ENCODE measurements at regions of chr7 and their contacts with region 1.

Region 1: DNA sequence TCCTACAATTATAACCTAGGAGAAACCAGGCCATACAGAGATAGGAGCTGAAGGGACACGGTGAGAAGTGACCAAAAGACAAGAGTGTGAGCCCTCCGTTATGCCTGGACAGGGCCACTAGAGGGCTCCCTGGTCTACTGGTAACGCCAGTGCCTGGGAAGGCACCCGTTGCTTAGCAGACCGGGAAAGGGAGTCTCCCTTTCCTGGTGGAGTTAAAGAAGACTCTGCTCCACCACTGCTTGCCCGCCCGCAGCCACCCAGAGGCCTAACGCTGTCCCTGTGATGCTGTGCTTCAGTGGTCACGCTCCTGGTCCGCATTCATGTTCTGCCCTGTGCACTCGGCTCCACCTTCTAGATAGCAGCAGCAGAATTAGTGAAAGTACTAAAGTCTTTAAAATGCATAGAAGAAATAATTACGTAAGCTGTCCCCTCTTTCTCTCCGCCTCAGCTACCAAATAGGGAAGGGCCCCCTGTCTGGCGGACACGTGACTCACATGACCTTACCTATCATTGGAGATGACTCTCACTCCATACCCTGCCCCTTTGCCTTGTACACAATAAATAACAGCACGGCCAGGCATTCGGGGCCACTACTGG is 34.8 kb downstream of the GRID2IP start:
- DNase-seq: peak; percentile 79
- ATAC-seq: peak; percentile 97
- H3K4me3 ChIP-seq: no peak overlapping the region
- H3K27ac ChIP-seq: no peak overlapping the region
- H3K4me1 ChIP-seq: peaks cover 2 to 5% of the 10 kb centered on the region in 2 experiments; a peak in 3 of 4 replicates
- H3K27me3 ChIP-seq: no peaks in the 10 kb centered on the region
- CTCF ChIP-seq: peak; percentile 82 to 95 (median 87)
- POLR2A ChIP-seq: no peak
- RAD21 ChIP-seq: peak; percentile 92

Region 2: GRCh38 chr7:6576024-6576866 is 59.8 kb after region 1 on chr7:
- CTCF ChIA-PET with region 1: interaction called, 12 read pairs
- POLR2A ChIA-PET with region 1: no interaction called
- RAD21 ChIA-PET with region 1: no interaction called
- intact Hi-C with region 1: loop called (anchors 5 kb)
- DNase-seq: no peak
- ATAC-seq: peak; percentile 32; the same call in 1 of the 2 replicates
- H3K4me3 ChIP-seq: peak overlapping the region; percentile 69 to 87
- H3K27ac ChIP-seq: peak overlapping the region; percentile 49
- H3K4me1 ChIP-seq: peaks cover 11 to 23% of the 10 kb centered on the region in 2 experiments
- H3K27me3 ChIP-seq: no peaks in the 10 kb centered on the region
- CTCF ChIP-seq: peak in 2 of 3 experiments; percentile 6 to 22; a peak in 1 of 6 replicates
- POLR2A ChIP-seq: no peak
- RAD21 ChIP-seq: no peak

Region 3: GRCh38 chr7:6934986-6935385 is 418.5 kb after region 1 on chr7:
- CTCF ChIA-PET with region 1: interaction called, 6 read pairs
- POLR2A ChIA-PET with region 1: no interaction called
- RAD21 ChIA-PET with region 1: no interaction called
- intact Hi-C with region 1: loop called (anchors 10 kb)
- DNase-seq: no peak
- ATAC-seq: no peak
- H3K4me3 ChIP-seq: no peak overlapping the region
- H3K27ac ChIP-seq: no peak overlapping the region
- H3K4me1 ChIP-seq: no peaks in the 10 kb centered on the region
- H3K27me3 ChIP-seq: no peaks in the 10 kb centered on the region
- CTCF ChIP-seq: no peak
- POLR2A ChIP-seq: no peak
- RAD21 ChIP-seq: no peak

Measured in HCT116 (cell line).